ENCODE measurements at regions of chr4 and their contacts with region 1.

Region 1: GRCh38 chr4:115234405-115235093 is 121.1 kb upstream of the NDST4 start:
- DNase-seq: peak; percentile 12
- ATAC-seq: peak; percentile 88
- H3K4me3 ChIP-seq: no peak overlapping the region
- H3K27ac ChIP-seq: no peak overlapping the region
- H3K4me1 ChIP-seq: no peaks in the 10 kb centered on the region
- H3K27me3 ChIP-seq: no peaks in the 10 kb centered on the region
- CTCF ChIP-seq: peak; percentile 24 to 60 (median 27); a peak in 4 of 6 replicates
- EP300 ChIP-seq: no peak
- POLR2A ChIP-seq: no peak
- RAD21 ChIP-seq: peak; percentile 66

Region 2: GRCh38 chr4:115171220-115171619 is 63.3 kb before region 1 on chr4:
- CTCF ChIA-PET with region 1: no interaction called
- POLR2A ChIA-PET with region 1: no interaction called
- RAD21 ChIA-PET with region 1: no interaction called
- SMC1A ChIA-PET with region 1: no interaction called
- in situ Hi-C with region 1: no loop called
- intact Hi-C with region 1: no loop called
- DNase-seq: no peak
- ATAC-seq: no peak
- H3K4me3 ChIP-seq: no peak overlapping the region
- H3K27ac ChIP-seq: no peak overlapping the region
- H3K4me1 ChIP-seq: no peaks in the 10 kb centered on the region
- H3K27me3 ChIP-seq: no peaks in the 10 kb centered on the region
- CTCF ChIP-seq: no peak
- EP300 ChIP-seq: no peak
- POLR2A ChIP-seq: no peak
- RAD21 ChIP-seq: no peak

Region 3: DNA sequence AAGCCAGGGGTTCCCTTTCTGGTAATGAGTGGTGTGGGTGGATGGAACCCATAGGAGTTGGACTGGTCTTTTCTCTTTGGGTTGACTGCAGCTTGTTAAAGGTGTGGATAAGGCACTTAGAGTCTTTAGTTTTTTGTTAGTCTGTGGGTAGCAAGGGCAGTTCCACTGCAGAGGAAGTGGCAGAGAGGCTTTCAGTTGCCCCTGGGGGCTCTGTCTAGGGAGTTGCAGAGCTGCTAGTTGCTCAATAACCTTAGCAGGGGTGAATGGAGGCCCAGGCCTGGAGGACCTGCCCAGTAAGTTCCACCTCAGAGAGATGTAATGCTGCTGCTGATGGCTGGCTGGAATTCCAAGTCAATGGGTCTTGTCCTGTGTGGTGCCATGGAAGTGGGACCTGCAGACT is 161.5 kb after region 1 on chr4:
- CTCF ChIA-PET with region 1: no interaction called
- POLR2A ChIA-PET with region 1: no interaction called
- RAD21 ChIA-PET with region 1: no interaction called
- SMC1A ChIA-PET with region 1: no interaction called
- in situ Hi-C with region 1: no loop called
- intact Hi-C with region 1: no loop called
- DNase-seq: no peak
- ATAC-seq: no peak
- H3K4me3 ChIP-seq: no peak overlapping the region
- H3K27ac ChIP-seq: no peak overlapping the region
- H3K4me1 ChIP-seq: no peaks in the 10 kb centered on the region
- H3K27me3 ChIP-seq: no peaks in the 10 kb centered on the region
- CTCF ChIP-seq: no peak
- EP300 ChIP-seq: no peak
- POLR2A ChIP-seq: no peak
- RAD21 ChIP-seq: no peak

Region 4: GRCh38 chr4:115433501-115433900 is 199.0 kb after region 1 on chr4:
- CTCF ChIA-PET with region 1: no interaction called
- POLR2A ChIA-PET with region 1: no interaction called
- RAD21 ChIA-PET with region 1: no interaction called
- SMC1A ChIA-PET with region 1: interaction called, 3 read pairs
- in situ Hi-C with region 1: no loop called
- intact Hi-C with region 1: loop called (anchors 10 kb)
- DNase-seq: no peak
- ATAC-seq: no peak
- H3K4me3 ChIP-seq: no peak overlapping the region
- H3K27ac ChIP-seq: no peak overlapping the region
- H3K4me1 ChIP-seq: no peaks in the 10 kb centered on the region
- H3K27me3 ChIP-seq: no peaks in the 10 kb centered on the region; a peak in 1 of 4 replicates
- CTCF ChIP-seq: no peak
- EP300 ChIP-seq: no peak
- POLR2A ChIP-seq: no peak
- RAD21 ChIP-seq: no peak

Region 5: DNA sequence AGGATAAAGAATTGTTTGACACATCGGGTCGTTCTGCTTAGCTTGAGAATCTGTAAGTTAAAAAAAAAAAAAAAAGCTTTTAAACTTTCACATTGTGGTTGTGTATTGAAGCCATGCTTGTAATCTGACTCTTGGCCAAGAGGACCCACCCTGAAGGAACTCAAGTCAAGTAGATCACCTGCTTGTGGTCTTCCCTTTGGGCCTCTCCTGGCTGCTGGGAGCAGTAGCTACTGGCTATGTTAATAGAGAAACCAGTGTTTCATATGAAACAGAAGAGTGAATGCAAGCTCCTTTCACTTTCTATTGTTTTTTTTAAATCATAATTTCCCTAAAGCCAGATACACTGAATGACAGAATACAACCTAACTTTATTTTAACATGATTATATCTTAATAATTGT is 281.2 kb after region 1 on chr4:
- CTCF ChIA-PET with region 1: interaction called, 8 read pairs
- POLR2A ChIA-PET with region 1: no interaction called
- RAD21 ChIA-PET with region 1: interaction called, 20 read pairs
- SMC1A ChIA-PET with region 1: interaction called, 12 read pairs
- in situ Hi-C with region 1: no loop called
- intact Hi-C with region 1: no loop called
- DNase-seq: peak; percentile 32
- ATAC-seq: peak; percentile 95
- H3K4me3 ChIP-seq: no peak overlapping the region
- H3K27ac ChIP-seq: no peak overlapping the region
- H3K4me1 ChIP-seq: peaks cover 9% of the 10 kb centered on the region; the same call in 1 of the 2 replicates
- H3K27me3 ChIP-seq: no peaks in the 10 kb centered on the region
- CTCF ChIP-seq: no peak
- EP300 ChIP-seq: no peak
- POLR2A ChIP-seq: no peak
- RAD21 ChIP-seq: no peak

Region 6: GRCh38 chr4:115529126-115529525 is 294.6 kb after region 1 on chr4:
- CTCF ChIA-PET with region 1: interaction called, 5 read pairs
- POLR2A ChIA-PET with region 1: no interaction called
- RAD21 ChIA-PET with region 1: interaction called, 5 read pairs
- SMC1A ChIA-PET with region 1: interaction called, 120 read pairs
- in situ Hi-C with region 1: no loop called
- intact Hi-C with region 1: no loop called
- DNase-seq: no peak
- ATAC-seq: no peak
- H3K4me3 ChIP-seq: no peak overlapping the region
- H3K27ac ChIP-seq: no peak overlapping the region
- H3K4me1 ChIP-seq: no peaks in the 10 kb centered on the region
- H3K27me3 ChIP-seq: no peaks in the 10 kb centered on the region
- CTCF ChIP-seq: no peak
- EP300 ChIP-seq: no peak
- POLR2A ChIP-seq: no peak
- RAD21 ChIP-seq: no peak

Region 7: GRCh38 chr4:115537387-115537786 is 302.8 kb after region 1 on chr4:
- CTCF ChIA-PET with region 1: interaction called, 115 read pairs
- POLR2A ChIA-PET with region 1: no interaction called
- RAD21 ChIA-PET with region 1: interaction called, 140 read pairs
- SMC1A ChIA-PET with region 1: interaction called, 120 read pairs
- in situ Hi-C with region 1: no loop called
- intact Hi-C with region 1: loop called (anchors 1 kb)
- DNase-seq: no peak
- ATAC-seq: no peak
- H3K4me3 ChIP-seq: no peak overlapping the region
- H3K27ac ChIP-seq: no peak overlapping the region
- H3K4me1 ChIP-seq: no peaks in the 10 kb centered on the region
- H3K27me3 ChIP-seq: no peaks in the 10 kb centered on the region
- CTCF ChIP-seq: no peak; a peak in 1 of 6 replicates
- EP300 ChIP-seq: no peak
- POLR2A ChIP-seq: no peak
- RAD21 ChIP-seq: peak; percentile 48

Region 8: DNA sequence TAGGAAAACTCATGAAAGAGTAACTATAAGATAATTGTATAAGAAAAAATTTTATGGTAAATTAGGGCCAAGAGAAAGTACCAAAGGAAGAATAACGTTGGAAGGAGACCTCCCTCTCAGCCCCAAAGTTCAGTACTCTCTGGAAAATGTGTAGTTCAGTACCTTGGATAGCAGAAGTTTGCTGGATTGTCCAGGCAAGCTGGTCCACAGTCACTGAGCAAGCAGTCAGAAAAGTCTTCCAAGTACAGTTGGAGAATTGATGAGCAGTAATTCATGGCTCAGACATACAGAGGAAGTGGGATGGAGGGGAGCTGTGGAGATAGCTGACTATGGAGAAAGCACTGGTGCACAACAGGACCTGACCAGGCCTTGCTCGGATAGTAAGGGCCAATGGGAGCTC is 477.0 kb after region 1 on chr4:
- CTCF ChIA-PET with region 1: no interaction called
- POLR2A ChIA-PET with region 1: no interaction called
- RAD21 ChIA-PET with region 1: no interaction called
- SMC1A ChIA-PET with region 1: no interaction called
- in situ Hi-C with region 1: no loop called
- intact Hi-C with region 1: no loop called
- DNase-seq: no peak
- ATAC-seq: no peak; the same call in 2 of the 3 replicates
- H3K4me3 ChIP-seq: no peak overlapping the region
- H3K27ac ChIP-seq: no peak overlapping the region
- H3K4me1 ChIP-seq: no peaks in the 10 kb centered on the region
- H3K27me3 ChIP-seq: no peaks in the 10 kb centered on the region
- CTCF ChIP-seq: no peak
- EP300 ChIP-seq: no peak
- POLR2A ChIP-seq: no peak
- RAD21 ChIP-seq: no peak

Region 9: GRCh38 chr4:115781528-115782146 is 547.1 kb after region 1 on chr4:
- CTCF ChIA-PET with region 1: interaction called, 5 read pairs
- POLR2A ChIA-PET with region 1: no interaction called
- RAD21 ChIA-PET with region 1: interaction called, 9 read pairs
- SMC1A ChIA-PET with region 1: interaction called, 4 read pairs
- in situ Hi-C with region 1: no loop called
- intact Hi-C with region 1: loop called (anchors 5 kb)
- DNase-seq: peak; percentile 25
- ATAC-seq: peak; percentile 82
- H3K4me3 ChIP-seq: peak overlapping the region; percentile 21; the same call in 1 of the 2 replicates
- H3K27ac ChIP-seq: no peak overlapping the region; the same call in 1 of the 2 replicates
- H3K4me1 ChIP-seq: no peaks in the 10 kb centered on the region
- H3K27me3 ChIP-seq: no peaks in the 10 kb centered on the region
- CTCF ChIP-seq: no peak
- EP300 ChIP-seq: no peak; a peak in 2 of 4 replicates
- POLR2A ChIP-seq: no peak
- RAD21 ChIP-seq: no peak

Measured in GM12878 (cell line).